Colonic mucosa (tissue), 4 donors: ENCODE measurements at regions of chr10 and their contacts with region 1.

Region 1: GRCh38 chr10:22003079-22003913 is at the start of gene DNAJC1:
- DNase-seq: peak; percentile 100
- H3K4me3 ChIP-seq: peak within 1 kb of the TSS; percentile 86
- H3K27ac ChIP-seq: peak within 1 kb of the TSS; percentile 97
- H3K4me1 ChIP-seq: no peaks in the 10 kb centered on the region
- H3K27me3 ChIP-seq: no peaks in the 10 kb centered on the region
- CTCF ChIP-seq: peak; percentile 3
- total RNA-seq, gene DNAJC1: 27.4 to 33.8 TPM

Region 2: GRCh38 chr10:22325272-22326144 is 322.2 kb after region 1 on chr10:
- intact Hi-C with region 1: loop called (anchors 5 kb)
- DNase-seq: peak; percentile 66
- H3K4me3 ChIP-seq: peak overlapping the region; percentile 49
- H3K27ac ChIP-seq: peak overlapping the region; percentile 26
- H3K4me1 ChIP-seq: no peaks in the 10 kb centered on the region
- H3K27me3 ChIP-seq: peaks cover 10% of the 10 kb centered on the region
- CTCF ChIP-seq: no peak

Region 3: GRCh38 chr10:22436884-22437619 is 433.8 kb after region 1 on chr10:
- intact Hi-C with region 1: loop called (anchors 5 kb)
- DNase-seq: peak; percentile 88
- H3K4me3 ChIP-seq: peak overlapping the region; percentile 73
- H3K27ac ChIP-seq: peak overlapping the region; percentile 95
- H3K4me1 ChIP-seq: peaks cover 10% of the 10 kb centered on the region
- H3K27me3 ChIP-seq: no peaks in the 10 kb centered on the region
- CTCF ChIP-seq: no peak

Region 4: DNA sequence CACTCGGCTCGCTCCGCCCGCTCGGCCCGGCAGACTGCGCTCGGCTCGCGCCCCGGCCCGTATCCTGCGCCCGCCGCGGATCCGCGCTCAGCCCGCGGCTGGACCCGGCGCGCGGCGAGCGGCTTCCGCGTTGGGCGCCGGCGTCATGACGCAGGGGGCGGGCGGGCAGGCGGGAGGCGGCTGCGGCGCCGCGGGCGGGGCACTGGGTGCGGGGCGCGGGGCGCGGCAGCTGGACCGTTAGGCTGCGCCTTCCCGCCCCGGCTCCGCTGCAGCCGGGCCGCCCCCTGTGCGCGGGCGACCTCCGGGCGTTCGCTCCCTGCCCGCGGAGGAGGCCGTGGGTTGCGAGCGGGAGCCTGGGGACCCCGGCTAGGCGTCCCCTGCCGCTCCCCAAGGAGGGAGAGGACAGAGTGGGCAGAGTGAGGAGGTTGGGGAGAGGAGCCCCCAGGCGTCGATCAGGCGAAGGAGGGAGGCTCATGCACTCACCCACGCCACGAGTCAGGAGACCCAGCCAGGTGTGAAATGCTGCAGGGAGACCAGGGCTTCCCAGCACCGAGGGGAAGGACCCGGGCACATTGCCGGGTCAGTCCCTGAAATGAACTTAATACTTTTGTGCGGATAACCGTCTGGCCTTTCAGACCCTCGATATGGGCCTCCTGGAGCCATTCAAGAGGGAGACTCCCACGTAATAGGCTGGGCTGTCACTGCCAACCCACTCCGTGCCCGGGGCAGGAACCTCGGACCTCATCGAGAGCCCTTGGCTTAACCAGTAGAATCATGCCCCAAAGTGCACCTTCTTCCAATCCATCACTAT is 711.4 kb after region 1 on chr10 and contains the start of gene PIP4K2A:
- intact Hi-C with region 1: loop called (anchors 10 kb)
- DNase-seq: peak; percentile 73
- H3K4me3 ChIP-seq: peak within 1 kb of the TSS; percentile 81
- H3K27ac ChIP-seq: peak within 1 kb of the TSS; percentile 65
- H3K4me1 ChIP-seq: peaks cover 6% of the 10 kb centered on the region
- H3K27me3 ChIP-seq: no peaks in the 10 kb centered on the region
- CTCF ChIP-seq: no peak
- total RNA-seq, gene PIP4K2A: 12.1 to 14.9 TPM

Region 5: GRCh38 chr10:22988581-22989360 is 985.5 kb after region 1 on chr10:
- intact Hi-C with region 1: loop called (anchors 5 kb)
- DNase-seq: peak; percentile 71
- H3K4me3 ChIP-seq: no peak overlapping the region
- H3K27ac ChIP-seq: no peak overlapping the region
- H3K4me1 ChIP-seq: no peaks in the 10 kb centered on the region
- H3K27me3 ChIP-seq: no peaks in the 10 kb centered on the region
- CTCF ChIP-seq: peak; percentile 88

Region 6: GRCh38 chr10:23067939-23068775 is 1064.9 kb after region 1 on chr10:
- intact Hi-C with region 1: loop called (anchors 10 kb)
- DNase-seq: peak; percentile 85
- H3K4me3 ChIP-seq: no peak overlapping the region
- H3K27ac ChIP-seq: no peak overlapping the region
- H3K4me1 ChIP-seq: peaks cover 8% of the 10 kb centered on the region
- H3K27me3 ChIP-seq: no peaks in the 10 kb centered on the region
- CTCF ChIP-seq: peak; percentile 90